Breast epithelium (tissue), 4 donors: ENCODE measurements at regions of chr13 and their contacts with region 1.

Region 1: DNA sequence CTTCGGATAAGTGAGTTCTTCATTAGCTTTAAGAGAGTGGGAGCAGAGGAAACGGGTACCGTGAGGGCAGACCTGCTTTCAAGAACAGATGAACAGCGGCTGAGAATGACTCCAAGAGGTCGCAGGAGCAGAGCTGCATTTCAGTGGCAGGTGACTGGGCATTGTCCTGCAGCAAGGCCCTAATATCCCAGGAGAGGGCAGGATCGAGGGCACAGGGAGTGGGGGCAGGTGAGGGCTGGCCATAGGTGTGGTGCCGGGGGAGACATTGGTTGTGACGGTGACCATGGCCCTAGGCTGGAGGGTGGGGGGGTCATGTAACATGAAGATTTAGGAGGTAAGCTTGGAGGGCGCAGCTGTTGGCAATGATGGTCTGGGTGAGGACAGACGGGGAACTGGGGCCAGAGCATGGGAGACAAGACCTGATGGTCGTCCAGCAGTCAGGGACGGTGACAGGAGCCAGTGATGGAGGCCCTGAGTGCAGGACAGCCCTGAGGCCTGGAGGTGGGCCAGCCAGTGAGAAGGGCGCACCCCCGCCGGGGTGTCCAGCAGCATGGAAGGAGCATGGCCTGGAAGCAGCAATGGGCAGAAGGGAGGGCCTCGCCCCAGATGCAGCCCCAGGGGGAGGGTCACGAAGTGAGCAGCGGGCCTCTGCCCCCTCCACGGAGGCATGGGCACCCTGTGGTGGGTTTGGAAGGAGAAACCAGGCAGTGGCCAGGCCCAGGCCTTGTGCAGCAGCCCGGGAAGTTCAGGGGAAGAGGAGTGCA is 29.2 kb upstream of the LAMP1 start:
- DNase-seq: no peak
- H3K4me3 ChIP-seq: no peak overlapping the region
- H3K27ac ChIP-seq: no peak overlapping the region
- H3K4me1 ChIP-seq: no peaks in the 10 kb centered on the region
- H3K27me3 ChIP-seq: no peaks in the 10 kb centered on the region
- CTCF ChIP-seq: no peak
- POLR2A ChIP-seq: no peak

Region 2: DNA sequence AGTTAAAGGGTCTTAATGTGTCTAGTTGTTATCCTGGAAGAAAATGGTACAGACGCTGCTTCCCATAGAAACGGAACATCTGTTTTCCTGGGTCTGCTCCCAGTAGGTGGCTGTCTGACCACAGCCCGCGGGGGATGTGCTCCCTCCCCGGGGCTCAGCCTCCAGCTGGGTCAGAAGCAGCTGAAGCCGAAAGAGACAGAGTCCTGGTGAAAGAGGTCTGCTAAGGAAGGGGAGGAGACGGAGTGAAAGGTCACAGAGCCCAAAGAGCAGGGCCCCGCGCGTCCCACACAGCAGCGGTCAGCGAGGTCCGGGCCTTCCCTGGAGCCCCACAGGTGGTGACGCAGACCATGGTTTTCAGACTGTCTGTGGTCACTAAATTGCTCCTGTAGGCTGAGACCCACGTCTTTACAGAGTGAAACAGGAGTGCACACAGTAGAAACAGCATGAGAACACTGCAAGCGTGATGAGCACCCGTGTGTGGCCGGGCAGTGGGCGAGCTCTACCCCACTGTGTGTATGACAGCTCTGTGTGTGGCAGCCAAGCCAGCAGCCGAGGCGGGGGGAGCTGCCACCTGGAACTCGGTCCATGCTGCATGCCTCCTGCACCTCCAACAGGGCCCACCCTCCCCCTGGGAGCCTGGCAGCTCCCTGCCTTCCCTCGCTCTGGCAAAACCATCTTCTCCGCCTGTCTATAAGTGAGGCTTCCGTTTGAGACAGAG is 758.0 kb after region 1 on chr13:
- intact Hi-C with region 1: loop called (anchors 5 kb)
- DNase-seq: no peak
- H3K4me3 ChIP-seq: no peak overlapping the region
- H3K27ac ChIP-seq: peak overlapping the region in 1 of 2 donors; percentile 20
- H3K4me1 ChIP-seq: no peaks in the 10 kb centered on the region
- H3K27me3 ChIP-seq: no peaks in the 10 kb centered on the region
- CTCF ChIP-seq: no peak
- POLR2A ChIP-seq: no peak